ENCODE measurements at regions of chrX and their contacts with region 1.

Region 1: GRCh38 chrX:65667503-65668376 is at the start of gene MSN:
- DNase-seq: peak; percentile 63
- ATAC-seq: peak; percentile 79
- H3K4me3 Mint-ChIP-seq: peak within 1 kb of the TSS; percentile 93
- H3K27ac Mint-ChIP-seq: peak within 1 kb of the TSS; percentile 89
- H3K4me1 Mint-ChIP-seq: peaks cover 46% of the 10 kb centered on the region
- H3K27me3 Mint-ChIP-seq: no peaks in the 10 kb centered on the region
- CTCF ChIP-seq: no peak
- total RNA-seq, gene MSN: 352 TPM in 2 replicates

Region 2: GRCh38 chrX:64205735-64206491 is 1461.8 kb before region 1 on chrX:
- CTCF ChIA-PET with region 1: no interaction called
- POLR2A ChIA-PET with region 1: no interaction called
- intact Hi-C with region 1: loop called (anchors 5 kb)
- DNase-seq: peak; percentile 75
- ATAC-seq: peak; percentile 88
- H3K4me3 Mint-ChIP-seq: peak overlapping the region; percentile 92
- H3K27ac Mint-ChIP-seq: peak overlapping the region; percentile 95
- H3K4me1 Mint-ChIP-seq: peaks cover 18% of the 10 kb centered on the region
- H3K27me3 Mint-ChIP-seq: no peaks in the 10 kb centered on the region
- CTCF ChIP-seq: no peak

Region 3: DNA sequence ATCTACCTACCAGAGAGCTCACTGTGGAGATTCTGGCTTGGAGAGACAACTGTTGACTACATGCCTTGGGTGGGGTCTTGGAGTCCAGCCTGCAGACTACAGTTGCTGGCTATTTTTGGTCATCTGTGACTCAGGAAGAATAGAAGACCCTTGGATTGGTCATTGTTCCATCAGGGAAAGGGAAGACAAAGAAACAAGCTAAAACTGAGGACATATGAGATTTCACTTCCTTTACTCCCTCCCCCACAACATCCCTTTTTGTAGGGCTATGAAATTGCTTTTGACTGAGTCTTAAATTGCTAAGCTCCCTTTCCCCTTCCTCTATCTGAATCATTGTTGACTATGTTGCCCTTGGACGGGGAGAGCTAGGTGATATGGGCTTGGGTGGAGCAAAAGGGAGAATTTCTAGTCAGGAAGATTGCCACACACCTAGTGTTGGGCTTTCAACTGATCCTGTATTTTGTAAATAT is 11.4 kb after region 1 on chrX:
- CTCF ChIA-PET with region 1: no interaction called
- POLR2A ChIA-PET with region 1: interaction called, 10 read pairs
- intact Hi-C with region 1: no loop called
- DNase-seq: no peak
- ATAC-seq: peak; percentile 42
- H3K4me3 Mint-ChIP-seq: peak overlapping the region; percentile 57
- H3K27ac Mint-ChIP-seq: peak overlapping the region; percentile 77
- H3K4me1 Mint-ChIP-seq: peaks cover 88% of the 10 kb centered on the region
- H3K27me3 Mint-ChIP-seq: no peaks in the 10 kb centered on the region
- CTCF ChIP-seq: no peak

Region 4: DNA sequence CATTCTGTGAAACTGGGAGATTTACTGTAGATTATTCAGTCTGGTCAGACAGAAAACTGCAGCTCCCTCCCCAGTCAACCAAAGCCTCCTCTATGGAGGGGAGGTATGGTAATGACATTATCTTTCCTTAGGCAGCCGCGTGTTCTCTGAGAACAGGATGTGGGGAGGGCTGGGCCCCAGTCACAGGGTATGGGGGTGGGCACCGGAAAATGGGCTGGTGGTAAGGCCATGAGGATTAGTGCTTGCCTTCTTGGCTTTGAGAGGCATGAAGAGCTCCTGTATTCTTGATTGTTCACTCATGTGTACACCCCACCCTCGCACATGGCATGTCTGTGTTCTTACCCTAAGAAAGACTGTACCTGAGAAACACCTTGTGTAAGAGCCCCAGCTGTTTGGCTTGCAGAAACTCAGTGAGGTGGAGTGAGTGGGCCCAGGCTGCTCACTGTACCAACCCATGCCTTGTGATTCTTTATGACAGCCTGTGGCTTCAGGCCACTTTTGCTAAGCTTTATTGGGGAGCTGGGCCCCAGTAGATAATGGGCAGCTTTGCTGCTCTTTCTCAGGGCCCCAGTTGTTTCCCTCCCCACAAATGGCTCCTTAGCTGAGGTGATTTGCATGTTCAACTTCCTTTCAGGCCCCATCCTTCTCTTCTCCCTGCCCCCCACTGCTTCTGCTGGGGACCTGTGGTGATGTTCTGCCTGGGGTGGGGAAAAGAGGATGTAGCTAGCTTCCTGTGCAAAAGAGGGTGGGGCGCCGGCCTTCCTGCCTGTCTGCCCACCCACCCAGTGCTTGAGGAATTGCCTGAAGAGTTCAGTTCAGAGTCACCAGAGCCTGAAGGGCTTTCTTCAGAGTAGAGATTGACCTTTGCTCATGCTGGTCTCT is 30.4 kb after region 1 on chrX:
- CTCF ChIA-PET with region 1: interaction called, 3 read pairs
- POLR2A ChIA-PET with region 1: interaction called, 13 read pairs
- intact Hi-C with region 1: loop called (anchors 1 kb)
- DNase-seq: peak; percentile 28
- ATAC-seq: peak; percentile 55
- H3K4me3 Mint-ChIP-seq: peak overlapping the region; percentile 67
- H3K27ac Mint-ChIP-seq: peak overlapping the region; percentile 91
- H3K4me1 Mint-ChIP-seq: peaks cover 95% of the 10 kb centered on the region
- H3K27me3 Mint-ChIP-seq: no peaks in the 10 kb centered on the region
- CTCF ChIP-seq: no peak

Region 5: DNA sequence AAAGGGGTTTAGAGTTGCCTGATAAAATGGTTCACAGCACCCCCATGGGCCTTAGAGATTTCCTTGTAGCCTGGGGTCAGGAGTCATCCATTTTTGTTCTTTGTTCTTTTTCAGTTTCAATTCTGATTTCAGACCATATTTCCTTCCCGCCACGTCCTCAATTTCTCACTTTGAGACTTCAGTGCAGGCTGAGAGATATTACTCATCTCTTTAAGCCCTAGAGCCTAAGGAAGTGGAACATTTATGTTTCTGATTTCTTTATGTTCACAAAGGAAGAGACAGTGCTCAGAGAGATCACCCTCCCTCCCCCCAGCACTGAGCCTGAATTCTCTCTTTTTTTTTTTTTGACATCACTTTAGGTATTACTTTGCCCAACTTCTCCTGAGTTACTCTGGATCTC is 56.0 kb after region 1 on chrX:
- CTCF ChIA-PET with region 1: interaction called, 3 read pairs
- POLR2A ChIA-PET with region 1: no interaction called
- intact Hi-C with region 1: loop called (anchors 1 kb)
- DNase-seq: no peak
- ATAC-seq: peak; percentile 88
- H3K4me3 Mint-ChIP-seq: peak overlapping the region; percentile 32
- H3K27ac Mint-ChIP-seq: peak overlapping the region; percentile 76
- H3K4me1 Mint-ChIP-seq: peaks cover 87% of the 10 kb centered on the region
- H3K27me3 Mint-ChIP-seq: no peaks in the 10 kb centered on the region
- CTCF ChIP-seq: no peak

Region 6: GRCh38 chrX:65985922-65986588 is 318.3 kb after region 1 on chrX:
- CTCF ChIA-PET with region 1: no interaction called
- POLR2A ChIA-PET with region 1: interaction called, 4 read pairs
- intact Hi-C with region 1: loop called (anchors 1 kb)
- DNase-seq: no peak
- ATAC-seq: peak; percentile 92
- H3K4me3 Mint-ChIP-seq: no peak overlapping the region
- H3K27ac Mint-ChIP-seq: peak overlapping the region; percentile 74
- H3K4me1 Mint-ChIP-seq: peaks cover 43% of the 10 kb centered on the region
- H3K27me3 Mint-ChIP-seq: no peaks in the 10 kb centered on the region
- CTCF ChIP-seq: no peak

Region 7: GRCh38 chrX:66015152-66015831 is 347.6 kb after region 1 on chrX:
- CTCF ChIA-PET with region 1: no interaction called
- POLR2A ChIA-PET with region 1: no interaction called
- intact Hi-C with region 1: loop called (anchors 5 kb)
- DNase-seq: peak; percentile 16
- ATAC-seq: peak; percentile 43
- H3K4me3 Mint-ChIP-seq: peak overlapping the region; percentile 73
- H3K27ac Mint-ChIP-seq: peak overlapping the region; percentile 93
- H3K4me1 Mint-ChIP-seq: peaks cover 95% of the 10 kb centered on the region
- H3K27me3 Mint-ChIP-seq: no peaks in the 10 kb centered on the region
- CTCF ChIP-seq: no peak